ENCODE measurements at regions of chr5 and their contacts with region 1.

Region 1: DNA sequence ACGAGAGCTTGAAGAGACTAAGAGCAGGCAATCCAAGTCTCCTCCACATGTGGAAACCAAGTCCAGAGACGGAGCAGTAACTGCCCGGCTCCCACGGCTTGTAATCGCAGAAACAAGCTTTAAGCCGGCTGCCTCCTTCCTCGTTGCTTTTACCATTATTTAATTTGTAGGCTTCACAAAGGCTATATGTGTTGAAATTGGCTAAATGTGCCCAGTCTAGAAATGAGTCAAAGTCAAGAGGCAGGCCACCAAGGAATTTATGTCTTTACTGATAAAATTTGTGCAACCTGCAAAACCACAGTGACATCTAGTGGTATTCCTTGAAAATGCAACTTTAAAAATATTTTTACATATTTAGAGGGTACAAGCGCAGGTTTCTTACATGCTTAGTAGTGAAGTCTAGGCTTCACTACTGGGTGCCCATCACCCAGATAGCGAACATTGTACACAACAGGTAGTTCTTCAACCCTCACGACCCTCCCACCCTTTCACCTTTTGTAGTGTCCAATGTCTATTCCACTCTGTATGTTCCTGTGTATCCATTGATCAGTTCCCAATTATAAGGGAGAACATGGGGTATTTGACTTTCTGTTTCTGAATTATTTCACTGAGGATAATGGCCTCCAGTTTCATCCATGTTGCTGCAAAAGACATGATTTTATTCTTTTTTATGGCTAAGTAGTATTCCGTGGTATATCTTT is 33.5 kb upstream of the EBF1 start:
- DNase-seq: peak in 2 of 4 donors; percentile 46 to 65
- ATAC-seq: peak; percentile 91
- H3K4me3 ChIP-seq: no peak overlapping the region
- H3K27ac ChIP-seq: no peak overlapping the region
- H3K4me1 ChIP-seq: no peaks in the 10 kb centered on the region
- H3K27me3 ChIP-seq: peaks cover 0 to under 1% of the 10 kb centered on the region in 2 donors
- CTCF ChIP-seq: peak; percentile 52 to 85

Region 2: DNA sequence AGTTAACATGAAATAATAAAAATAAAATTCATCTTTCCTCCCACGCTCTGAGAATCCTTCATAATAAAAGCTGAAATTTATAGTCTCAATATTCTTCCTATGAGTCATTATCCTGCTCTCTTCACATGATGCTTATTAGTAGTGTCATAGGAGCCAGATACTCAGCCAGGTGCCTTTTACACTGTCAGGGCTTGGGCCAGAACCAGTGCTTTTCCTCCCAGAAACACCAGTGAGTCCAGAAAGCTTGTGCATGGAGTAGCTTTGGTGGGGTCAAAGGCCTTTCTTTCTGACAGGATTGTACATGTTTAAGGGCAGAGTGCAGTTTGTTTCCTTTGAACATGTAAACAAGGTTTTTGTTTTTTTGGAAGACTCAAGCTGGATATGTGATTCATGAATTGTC is 1382.9 kb before region 1 on chr5:
- intact Hi-C with region 1: loop called in 1 of 2 experiments (anchors 10 kb)
- DNase-seq: no peak
- ATAC-seq: no peak
- H3K4me3 ChIP-seq: no peak overlapping the region
- H3K27ac ChIP-seq: no peak overlapping the region
- H3K4me1 ChIP-seq: peaks cover 0 to 3% of the 10 kb centered on the region in 2 donors
- H3K27me3 ChIP-seq: no peaks in the 10 kb centered on the region
- CTCF ChIP-seq: no peak

Region 3: GRCh38 chr5:159034083-159034824 is 98.9 kb before region 1 on chr5:
- intact Hi-C with region 1: no loop called
- DNase-seq: no peak
- ATAC-seq: no peak
- H3K4me3 ChIP-seq: no peak overlapping the region
- H3K27ac ChIP-seq: no peak overlapping the region
- H3K4me1 ChIP-seq: peaks cover 0 to 16% of the 10 kb centered on the region in 2 donors
- H3K27me3 ChIP-seq: peaks cover 0 to 45% of the 10 kb centered on the region in 2 donors
- CTCF ChIP-seq: no peak

Measured in left lung (tissue), 14 donors.